Psoas muscle (tissue), 8 donors: ENCODE measurements at regions of chr17 and their contacts with region 1.

Region 1: GRCh38 chr17:45834471-45835396 is 9.9 kb upstream of the SPPL2C start:
- DNase-seq: no peak
- ATAC-seq: no peak
- H3K4me3 ChIP-seq: no peak overlapping the region
- H3K27ac ChIP-seq: no peak overlapping the region
- H3K4me1 ChIP-seq: no peaks in the 10 kb centered on the region
- H3K27me3 ChIP-seq: no peaks in the 10 kb centered on the region
- CTCF ChIP-seq: no peak

Region 2: GRCh38 chr17:45394913-45395568 is 439.7 kb before region 1 on chr17:
- intact Hi-C with region 1: loop called in 1 of 2 experiments (anchors 10 kb)
- DNase-seq: peak; percentile 67 to 82
- ATAC-seq: peak; percentile 80 to 93 (median 85)
- H3K4me3 ChIP-seq: peak overlapping the region; percentile 29
- H3K27ac ChIP-seq: no peak overlapping the region
- H3K4me1 ChIP-seq: no peaks in the 10 kb centered on the region
- H3K27me3 ChIP-seq: no peaks in the 10 kb centered on the region
- CTCF ChIP-seq: peak; percentile 68

Region 3: DNA sequence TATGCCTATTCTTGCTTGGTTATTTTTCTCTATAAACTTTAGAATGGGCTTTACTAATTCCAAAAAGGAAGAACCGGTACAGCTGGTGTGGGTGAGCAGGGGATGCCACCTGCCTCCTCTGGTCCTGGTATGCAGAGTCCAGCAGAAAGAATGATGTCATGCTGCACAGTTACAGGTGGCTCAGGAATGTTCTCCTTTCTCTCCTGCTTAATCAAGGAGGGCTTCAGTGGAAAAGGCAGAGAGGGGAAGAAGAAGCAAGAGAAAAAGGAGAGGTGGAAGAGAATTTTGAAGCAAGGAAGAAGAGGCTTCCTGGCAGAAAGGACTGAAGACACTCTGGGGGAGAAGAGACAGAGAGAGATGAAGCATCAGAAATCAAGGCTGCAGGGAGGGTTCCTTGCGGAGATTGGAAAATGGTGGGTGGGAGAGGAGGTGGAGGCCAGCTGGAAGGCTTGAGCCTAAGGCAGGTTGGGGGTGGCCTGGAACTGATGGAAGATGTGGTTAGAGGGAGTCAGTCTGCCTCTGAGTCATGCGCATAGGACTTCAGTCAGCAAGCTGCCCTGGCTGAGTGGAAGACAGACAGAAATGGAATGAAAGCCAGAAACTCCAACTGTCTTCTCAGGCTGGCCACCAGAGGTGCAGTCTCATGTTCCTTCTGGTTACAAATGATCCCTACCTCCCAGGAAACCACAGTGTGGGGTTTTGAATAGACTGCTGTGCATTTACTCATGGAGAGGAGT is 115.2 kb before region 1 on chr17:
- intact Hi-C with region 1: loop called in 1 of 2 experiments (anchors 5 kb)
- DNase-seq: no peak
- ATAC-seq: peak; percentile 96 to 97 (median 96)
- H3K4me3 ChIP-seq: no peak overlapping the region
- H3K27ac ChIP-seq: no peak overlapping the region
- H3K4me1 ChIP-seq: no peaks in the 10 kb centered on the region
- H3K27me3 ChIP-seq: peaks cover 0 to 13% (median 0%) of the 10 kb centered on the region in 3 donors
- CTCF ChIP-seq: peak; percentile 50

Region 4: DNA sequence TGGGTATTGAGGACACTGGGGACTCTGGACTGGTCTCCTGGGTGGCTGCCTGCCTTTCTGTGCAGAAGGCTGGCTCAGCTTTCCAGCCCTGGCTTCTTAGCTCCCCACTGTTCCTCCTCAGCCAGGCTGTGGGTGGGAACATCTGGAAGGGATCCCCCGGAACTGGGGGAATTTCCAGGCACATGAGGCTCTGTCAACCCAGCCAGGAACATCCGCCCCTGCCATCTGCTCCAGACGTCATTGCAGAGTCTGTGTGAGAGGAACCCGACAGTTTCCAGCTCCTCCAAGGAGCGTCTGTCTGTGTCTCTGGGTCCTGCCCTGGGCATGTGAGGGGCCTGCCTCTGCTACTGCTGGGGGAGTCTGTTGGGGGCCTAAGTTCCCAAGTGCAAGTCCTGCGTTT is 86.8 kb before region 1 on chr17:
- intact Hi-C with region 1: no loop called
- DNase-seq: no peak
- ATAC-seq: no peak
- H3K4me3 ChIP-seq: no peak overlapping the region
- H3K27ac ChIP-seq: no peak overlapping the region
- H3K4me1 ChIP-seq: peaks cover 7% of the 10 kb centered on the region
- H3K27me3 ChIP-seq: peaks cover 0 to 2% (median 2%) of the 10 kb centered on the region in 3 donors
- CTCF ChIP-seq: no peak